ENCODE measurements at regions of chr12 and their contacts with region 1.

Region 1: DNA sequence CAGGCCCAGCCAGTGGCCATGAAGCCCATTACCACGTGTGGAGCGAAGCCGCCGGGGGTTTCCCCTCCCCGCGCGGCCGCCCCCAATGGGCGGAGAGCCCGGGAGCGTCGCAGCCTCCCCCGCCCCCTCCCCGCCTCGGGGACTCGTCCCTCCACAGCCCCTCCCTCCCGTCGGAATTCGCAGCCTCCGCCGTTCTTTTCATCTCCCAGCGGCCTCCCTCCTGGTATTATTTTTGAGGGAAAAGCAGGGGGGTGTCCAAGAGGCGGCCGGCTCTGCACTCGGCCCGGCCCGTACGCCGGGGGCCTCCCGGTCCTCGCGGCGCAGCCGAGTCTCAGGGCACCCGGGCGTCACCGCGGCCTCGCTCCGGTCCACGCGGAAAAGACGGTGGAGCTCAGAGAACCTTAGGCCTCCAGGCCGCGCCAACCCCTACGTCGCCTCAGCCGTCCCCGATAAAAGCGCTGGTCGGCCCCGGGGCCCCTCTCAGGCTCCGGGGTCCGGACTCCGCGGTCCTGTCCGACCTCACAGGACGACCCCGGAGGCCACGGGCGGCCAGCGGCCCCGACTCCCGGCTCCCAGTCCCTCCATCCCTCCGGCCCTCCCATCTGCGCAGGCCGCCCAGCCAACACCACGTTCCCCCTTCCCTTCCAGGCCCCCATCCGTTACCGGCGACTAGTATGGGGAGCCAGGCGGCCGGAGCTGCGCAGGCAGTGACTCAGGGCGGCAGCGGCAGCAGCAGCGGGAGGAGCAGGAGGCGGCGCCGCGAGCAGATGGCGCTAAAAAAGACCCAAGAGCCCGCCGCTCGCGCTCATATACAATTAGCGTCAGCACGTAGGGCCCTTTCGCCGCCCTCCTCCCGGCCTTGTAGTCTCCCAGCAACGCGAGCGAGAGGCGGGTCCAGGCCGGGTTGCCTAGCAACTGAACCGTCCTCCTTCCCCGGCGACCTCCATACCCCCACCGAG is at the start of gene NAP1L1:
- DNase-seq: peak; percentile 79
- ATAC-seq: peak; percentile 89
- H3K4me3 ChIP-seq: peak within 1 kb of the TSS; percentile 74
- H3K27ac ChIP-seq: peak within 1 kb of the TSS; percentile 91
- H3K4me1 ChIP-seq: peaks cover 11% of the 10 kb centered on the region
- H3K27me3 ChIP-seq: no peaks in the 10 kb centered on the region; a peak in 1 of 4 replicates
- CTCF ChIP-seq: no peak
- EP300 ChIP-seq: no peak
- POLR2A ChIP-seq: peak; percentile 94
- RAD21 ChIP-seq: no peak
- polyA plus RNA-seq, gene NAP1L1: 380 to 655 TPM

Region 2: DNA sequence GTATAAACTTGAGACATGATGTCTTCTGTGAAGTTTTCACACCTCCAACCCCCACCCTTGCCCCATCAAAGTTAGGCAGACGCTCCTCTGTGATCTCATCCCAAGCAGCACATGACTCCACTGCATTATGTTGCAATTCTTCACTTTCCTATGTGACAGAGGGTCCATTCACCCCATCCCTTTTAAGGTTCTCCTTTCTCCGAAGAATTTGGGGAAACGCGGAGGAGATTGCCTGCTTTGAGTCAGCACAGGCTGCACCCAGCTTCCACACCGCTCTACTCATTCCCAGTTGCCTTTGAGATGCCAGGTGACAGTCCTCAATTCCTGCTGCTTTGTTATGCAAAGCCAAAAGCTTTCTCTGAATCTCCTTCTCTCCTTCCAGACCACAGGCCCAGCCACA is 114.4 kb before region 1 on chr12:
- CTCF ChIA-PET with region 1: no interaction called
- POLR2A ChIA-PET with region 1: interaction called, 10 read pairs
- RAD21 ChIA-PET with region 1: no interaction called
- SMC1A ChIA-PET with region 1: no interaction called
- in situ Hi-C with region 1: no loop called
- intact Hi-C with region 1: no loop called
- DNase-seq: no peak
- ATAC-seq: no peak
- H3K4me3 ChIP-seq: no peak overlapping the region
- H3K27ac ChIP-seq: no peak overlapping the region
- H3K4me1 ChIP-seq: no peaks in the 10 kb centered on the region
- H3K27me3 ChIP-seq: no peaks in the 10 kb centered on the region
- CTCF ChIP-seq: no peak
- EP300 ChIP-seq: no peak
- POLR2A ChIP-seq: no peak
- RAD21 ChIP-seq: no peak

Region 3: DNA sequence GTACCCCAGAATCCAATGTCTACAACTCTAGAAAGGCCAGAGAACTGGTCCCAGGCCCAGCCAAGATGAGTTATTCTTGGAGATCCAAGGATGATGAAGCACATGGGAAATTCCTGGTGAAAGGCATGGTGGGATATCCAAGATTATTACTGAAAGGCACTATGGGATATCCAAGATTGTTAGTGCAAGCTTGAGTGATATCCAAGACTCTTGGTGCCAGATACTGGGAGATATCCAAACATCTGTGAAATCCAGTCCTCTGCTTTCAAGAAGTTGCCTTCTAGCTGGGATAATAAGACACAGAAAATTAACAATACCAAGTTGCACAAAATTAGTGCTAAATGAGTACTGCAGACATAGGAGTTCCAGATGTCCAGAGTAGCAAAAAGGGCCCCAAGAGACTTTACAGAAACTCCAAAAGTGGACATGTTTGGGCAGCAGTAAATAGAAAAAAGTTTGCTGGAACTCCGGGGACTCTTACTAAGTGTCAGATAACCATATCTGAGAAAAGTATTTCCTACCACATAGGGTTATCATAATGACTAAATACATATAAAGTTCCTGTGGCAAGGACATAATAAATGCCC is 87.2 kb before region 1 on chr12:
- CTCF ChIA-PET with region 1: no interaction called
- POLR2A ChIA-PET with region 1: no interaction called
- RAD21 ChIA-PET with region 1: no interaction called
- SMC1A ChIA-PET with region 1: no interaction called
- in situ Hi-C with region 1: no loop called
- intact Hi-C with region 1: no loop called
- DNase-seq: no peak
- ATAC-seq: peak; percentile 36
- H3K4me3 ChIP-seq: no peak overlapping the region
- H3K27ac ChIP-seq: no peak overlapping the region
- H3K4me1 ChIP-seq: no peaks in the 10 kb centered on the region
- H3K27me3 ChIP-seq: no peaks in the 10 kb centered on the region; a peak in 1 of 4 replicates
- CTCF ChIP-seq: no peak
- EP300 ChIP-seq: no peak
- POLR2A ChIP-seq: no peak
- RAD21 ChIP-seq: no peak

Region 4: GRCh38 chr12:76144245-76144549 is 60.0 kb after region 1 on chr12:
- CTCF ChIA-PET with region 1: interaction called, 4 read pairs
- POLR2A ChIA-PET with region 1: interaction called, 4 read pairs
- RAD21 ChIA-PET with region 1: interaction called, 3 read pairs
- SMC1A ChIA-PET with region 1: interaction called, 3 read pairs
- in situ Hi-C with region 1: no loop called
- intact Hi-C with region 1: loop called (anchors 5 kb)
- DNase-seq: no peak
- ATAC-seq: peak; percentile 53
- H3K4me3 ChIP-seq: no peak overlapping the region
- H3K27ac ChIP-seq: no peak overlapping the region
- H3K4me1 ChIP-seq: peaks cover 20% of the 10 kb centered on the region
- H3K27me3 ChIP-seq: no peaks in the 10 kb centered on the region
- CTCF ChIP-seq: no peak
- EP300 ChIP-seq: no peak
- POLR2A ChIP-seq: no peak
- RAD21 ChIP-seq: no peak

Region 5: GRCh38 chr12:76176940-76177339 is 92.8 kb after region 1 on chr12:
- CTCF ChIA-PET with region 1: interaction called, 3 read pairs
- POLR2A ChIA-PET with region 1: no interaction called
- RAD21 ChIA-PET with region 1: no interaction called
- SMC1A ChIA-PET with region 1: no interaction called
- in situ Hi-C with region 1: no loop called
- intact Hi-C with region 1: loop called (anchors 5 kb)
- DNase-seq: no peak
- ATAC-seq: no peak
- H3K4me3 ChIP-seq: no peak overlapping the region
- H3K27ac ChIP-seq: no peak overlapping the region
- H3K4me1 ChIP-seq: peaks cover 15% of the 10 kb centered on the region
- H3K27me3 ChIP-seq: no peaks in the 10 kb centered on the region
- CTCF ChIP-seq: no peak
- EP300 ChIP-seq: no peak
- POLR2A ChIP-seq: no peak
- RAD21 ChIP-seq: no peak

Region 6: DNA sequence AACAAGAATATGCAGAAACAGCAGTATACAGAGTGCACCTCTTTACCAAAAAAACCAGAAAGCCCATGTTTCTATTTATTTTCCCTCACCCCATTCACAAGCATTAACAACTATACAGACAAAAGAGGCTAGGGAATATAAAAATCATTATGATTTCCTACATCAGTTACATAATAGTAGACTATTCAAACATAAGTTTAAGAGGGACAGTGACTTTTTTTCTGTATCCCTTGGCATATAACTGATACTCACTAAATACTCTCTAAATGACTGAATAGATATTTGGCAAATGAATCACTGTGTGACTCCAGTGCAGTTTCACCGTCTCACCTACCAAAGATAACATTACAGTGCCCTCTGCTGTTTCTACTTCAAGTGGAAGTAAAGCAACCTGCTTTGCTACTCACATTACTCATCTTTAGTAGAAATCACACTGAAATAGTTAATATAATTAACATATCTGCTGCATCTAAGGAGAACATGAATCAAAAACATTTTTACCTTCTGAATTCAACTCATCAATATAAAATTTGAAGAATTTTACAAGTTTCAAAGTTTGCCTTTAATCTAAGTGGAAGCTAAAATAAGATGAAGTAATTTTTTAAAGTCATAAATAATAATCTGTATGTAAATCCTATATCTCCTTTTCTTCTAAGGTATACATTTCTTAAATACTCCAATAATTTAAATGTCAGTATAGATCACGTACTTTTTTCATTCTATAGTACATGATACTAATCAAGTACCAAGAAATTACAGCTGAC is 371.6 kb after region 1 on chr12:
- CTCF ChIA-PET with region 1: interaction called, 10 read pairs
- POLR2A ChIA-PET with region 1: interaction called, 3 read pairs
- RAD21 ChIA-PET with region 1: interaction called, 7 read pairs
- SMC1A ChIA-PET with region 1: no interaction called
- in situ Hi-C with region 1: no loop called
- intact Hi-C with region 1: loop called (anchors 5 kb)
- DNase-seq: peak; percentile 33
- ATAC-seq: peak; percentile 99
- H3K4me3 ChIP-seq: no peak overlapping the region
- H3K27ac ChIP-seq: no peak overlapping the region
- H3K4me1 ChIP-seq: no peaks in the 10 kb centered on the region
- H3K27me3 ChIP-seq: no peaks in the 10 kb centered on the region
- CTCF ChIP-seq: peak; percentile 54 to 73 (median 71); a peak in 5 of 6 replicates
- EP300 ChIP-seq: no peak
- POLR2A ChIP-seq: no peak
- RAD21 ChIP-seq: peak; percentile 89

Region 7: GRCh38 chr12:76586764-76587395 is 502.7 kb after region 1 on chr12:
- CTCF ChIA-PET with region 1: interaction called, 3 read pairs
- POLR2A ChIA-PET with region 1: interaction called, 5 read pairs
- RAD21 ChIA-PET with region 1: no interaction called
- SMC1A ChIA-PET with region 1: interaction called, 3 read pairs
- in situ Hi-C with region 1: no loop called
- intact Hi-C with region 1: loop called (anchors 10 kb)
- DNase-seq: no peak
- ATAC-seq: peak; percentile 82
- H3K4me3 ChIP-seq: no peak overlapping the region
- H3K27ac ChIP-seq: no peak overlapping the region
- H3K4me1 ChIP-seq: no peaks in the 10 kb centered on the region
- H3K27me3 ChIP-seq: no peaks in the 10 kb centered on the region
- CTCF ChIP-seq: peak; percentile 54 to 69 (median 68); a peak in 5 of 6 replicates
- EP300 ChIP-seq: no peak
- POLR2A ChIP-seq: no peak
- RAD21 ChIP-seq: peak; percentile 85

Region 8: DNA sequence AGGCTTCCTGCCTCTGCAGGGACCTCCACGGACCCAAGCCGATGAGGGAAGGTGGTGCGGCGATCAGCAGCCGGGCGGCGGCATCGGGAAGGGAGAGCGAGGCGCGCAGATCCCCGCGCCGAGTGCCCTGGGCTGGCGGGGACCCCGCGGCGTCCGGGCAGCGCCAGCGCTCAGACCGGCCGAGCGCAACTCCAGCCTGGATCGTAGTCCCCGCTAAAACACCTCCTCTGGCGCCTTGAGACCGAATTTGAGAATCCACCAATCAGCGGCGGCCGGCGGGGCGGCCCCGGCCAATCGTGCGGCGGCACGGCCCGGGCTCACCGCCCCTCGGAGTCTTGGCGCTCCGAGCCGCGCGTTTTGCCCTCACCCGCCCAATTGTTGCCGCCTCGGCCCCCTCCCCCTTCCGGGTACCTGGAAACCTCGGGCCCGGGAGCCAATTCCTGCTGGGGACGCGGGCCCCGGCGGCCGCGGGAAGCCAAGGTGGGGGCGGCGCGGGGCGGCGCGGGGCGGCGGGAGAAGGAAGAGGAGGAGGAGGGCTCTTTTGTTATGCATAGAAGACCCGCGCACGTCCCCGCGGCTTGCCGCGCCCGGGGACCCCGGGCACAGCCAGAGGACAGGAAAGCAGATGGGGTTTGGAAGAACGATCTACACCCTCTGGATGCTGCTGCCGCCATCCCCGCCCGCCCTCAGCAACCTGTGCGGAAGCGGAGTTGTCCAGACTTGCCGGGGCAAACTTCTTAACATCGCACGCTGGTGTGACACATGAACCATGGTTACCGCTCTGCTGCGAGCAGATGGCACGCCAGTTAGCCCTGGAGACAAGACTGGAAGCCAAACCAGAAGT is 981.4 kb after region 1 on chr12 and contains the start of gene E2F7:
- CTCF ChIA-PET with region 1: no interaction called
- POLR2A ChIA-PET with region 1: no interaction called
- RAD21 ChIA-PET with region 1: no interaction called
- SMC1A ChIA-PET with region 1: no interaction called
- in situ Hi-C with region 1: loop called (anchors 25 kb)
- intact Hi-C with region 1: no loop called
- DNase-seq: peak; percentile 56
- ATAC-seq: peak; percentile 84
- H3K4me3 ChIP-seq: peak within 1 kb of the TSS; percentile 91
- H3K27ac ChIP-seq: peak within 1 kb of the TSS; percentile 79
- H3K4me1 ChIP-seq: peaks cover 23% of the 10 kb centered on the region
- H3K27me3 ChIP-seq: no peaks in the 10 kb centered on the region
- CTCF ChIP-seq: no peak
- EP300 ChIP-seq: no peak
- POLR2A ChIP-seq: peak; percentile 88
- RAD21 ChIP-seq: no peak
- polyA plus RNA-seq, gene E2F7: 5.6 to 7.0 TPM